Adrenal gland (tissue), 19 donors: ENCODE measurements at regions of chr3 and their contacts with region 1.

Region 1: DNA sequence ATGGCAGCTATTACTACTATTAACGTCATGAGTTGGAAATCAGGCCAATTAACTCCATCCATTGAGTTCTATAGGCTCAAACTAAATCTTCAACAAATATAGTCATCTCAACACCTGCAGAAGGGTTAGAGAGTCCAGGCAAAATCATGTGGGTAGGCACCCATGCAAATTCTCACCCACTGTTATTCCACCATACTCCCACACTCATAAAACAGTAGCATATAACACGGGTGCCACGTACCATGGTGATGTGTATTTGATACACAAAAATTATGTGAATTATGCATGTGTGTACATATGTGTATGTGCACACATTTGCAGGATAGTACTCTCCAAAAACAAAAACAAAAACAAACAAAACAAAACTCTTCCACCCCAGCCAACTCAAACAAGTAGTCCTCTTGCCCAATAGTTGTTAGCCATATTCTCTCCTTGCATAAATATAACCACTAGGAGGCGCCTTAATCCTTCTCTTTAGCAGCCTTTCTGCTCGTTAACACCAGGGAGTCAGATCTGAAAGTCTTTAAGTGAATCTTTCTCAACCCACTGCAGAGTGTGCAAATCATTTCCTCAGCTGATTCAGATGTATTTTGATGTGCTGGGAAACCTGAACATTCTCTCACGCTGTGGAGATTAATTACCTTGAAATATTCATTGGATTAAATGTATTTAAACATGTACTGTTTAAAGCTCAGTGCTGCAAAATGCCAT is 38.0 kb upstream of the COPB2 start:
- DNase-seq: peak in 4 of 7 donors; percentile 16 to 34 (median 26)
- H3K4me3 ChIP-seq: no peak overlapping the region
- H3K27ac ChIP-seq: no peak overlapping the region
- H3K4me1 ChIP-seq: no peaks in the 10 kb centered on the region
- H3K27me3 ChIP-seq: no peaks in the 10 kb centered on the region
- CTCF ChIP-seq: peak; percentile 82 to 97 (median 90)
- POLR2A ChIP-seq: no peak

Region 2: GRCh38 chr3:139561959-139562676 is 134.7 kb after region 1 on chr3:
- intact Hi-C with region 1: loop called (anchors 5 kb)
- DNase-seq: peak in 6 of 7 donors; percentile 41 to 73 (median 58)
- H3K4me3 ChIP-seq: no peak overlapping the region
- H3K27ac ChIP-seq: no peak overlapping the region
- H3K4me1 ChIP-seq: no peaks in the 10 kb centered on the region
- H3K27me3 ChIP-seq: no peaks in the 10 kb centered on the region
- CTCF ChIP-seq: peak; percentile 53 to 95 (median 84)
- POLR2A ChIP-seq: no peak

Region 3: DNA sequence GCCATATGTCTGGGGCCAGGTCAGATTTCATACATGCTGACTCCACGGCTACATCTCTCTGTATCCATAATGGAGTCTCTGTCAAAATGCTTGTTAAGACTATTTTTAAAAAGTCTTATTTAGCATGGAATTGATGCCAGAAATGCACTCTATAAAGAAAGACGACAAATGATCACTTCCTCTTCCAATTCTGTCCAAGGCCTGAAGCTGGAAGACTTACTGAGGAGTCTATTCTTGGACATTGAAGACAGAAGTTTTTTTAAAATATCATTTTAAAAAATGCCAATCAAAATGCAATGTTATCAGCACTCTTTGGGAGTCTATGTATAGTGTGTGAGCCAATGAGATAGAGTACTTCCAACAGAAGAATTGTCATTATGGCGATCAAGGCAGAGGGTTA is 278.2 kb after region 1 on chr3:
- intact Hi-C with region 1: no loop called
- DNase-seq: no peak
- H3K4me3 ChIP-seq: no peak overlapping the region
- H3K27ac ChIP-seq: no peak overlapping the region
- H3K4me1 ChIP-seq: no peaks in the 10 kb centered on the region
- H3K27me3 ChIP-seq: no peaks in the 10 kb centered on the region
- CTCF ChIP-seq: no peak
- POLR2A ChIP-seq: no peak